CD8-positive, alpha-beta memory T cell (primary cell): ENCODE measurements at regions of chr11 and their contacts with region 1.

Region 1: GRCh38 chr11:82927254-82927880 is 25.8 kb downstream of the DDIAS start:
- DNase-seq: peak in 3 of 5 donors; percentile 49 to 66 (median 55)
- H3K4me3 ChIP-seq: no peak overlapping the region
- H3K4me3 Mint-ChIP-seq: no peak overlapping the region
- H3K27ac ChIP-seq: no peak overlapping the region
- H3K27ac Mint-ChIP-seq: peak overlapping the region in 5 of 8 donors; percentile 4 to 78 (median 20)
- H3K4me1 ChIP-seq: peaks cover 12% of the 10 kb centered on the region
- H3K4me1 Mint-ChIP-seq: peaks cover 20 to 28% (median 27%) of the 10 kb centered on the region in 3 donors
- H3K27me3 ChIP-seq: no peaks in the 10 kb centered on the region
- H3K27me3 Mint-ChIP-seq: no peaks in the 10 kb centered on the region

Region 2: DNA sequence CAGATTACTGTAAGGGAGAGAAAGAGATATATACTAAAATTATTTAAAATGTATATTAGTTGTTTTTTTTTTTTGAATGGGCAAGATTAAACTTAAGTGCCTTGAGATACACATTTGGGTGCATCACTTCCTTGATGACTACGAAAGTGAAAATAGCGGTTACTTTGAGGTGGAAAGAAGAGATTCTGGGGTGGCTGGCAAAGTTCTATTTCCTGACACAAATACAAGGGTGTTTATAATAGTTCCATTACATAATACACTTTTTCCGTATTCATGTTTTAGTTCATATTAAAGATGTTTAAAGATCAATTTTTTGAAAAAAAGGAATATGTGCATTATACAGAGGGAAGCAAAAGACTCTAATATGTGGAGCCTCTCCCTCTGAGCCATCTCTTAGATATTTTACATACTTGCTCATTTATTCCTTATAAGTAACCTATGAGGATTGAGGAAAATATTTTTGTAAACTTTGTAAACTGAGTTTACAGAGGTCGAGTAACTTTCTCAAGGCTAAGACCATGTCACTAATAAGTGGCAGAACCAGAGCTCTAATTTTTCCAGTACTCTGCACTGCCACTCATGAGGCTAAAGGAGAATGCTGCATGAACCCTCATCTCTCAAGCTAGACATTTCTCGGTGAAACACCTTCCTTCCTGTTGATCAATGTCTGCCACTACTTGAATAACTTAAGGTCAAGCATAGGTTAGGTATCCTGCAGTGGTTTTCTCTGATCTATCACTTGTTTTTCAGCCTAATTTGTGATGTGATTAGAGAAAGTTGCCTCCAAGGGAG is 32.8 kb after region 1 on chr11:
- CTCF ChIA-PET with region 1: interaction called, 10 read pairs
- POLR2A ChIA-PET with region 1: interaction called, 6 read pairs
- DNase-seq: peak in 4 of 5 donors; percentile 21 to 85 (median 74)
- H3K4me3 ChIP-seq: peak overlapping the region; percentile 49
- H3K4me3 Mint-ChIP-seq: peak overlapping the region; percentile 55 to 81 (median 78)
- H3K27ac ChIP-seq: peak overlapping the region; percentile 70
- H3K27ac Mint-ChIP-seq: peak overlapping the region; percentile 90 to 98 (median 96)
- H3K4me1 ChIP-seq: peaks cover 80% of the 10 kb centered on the region
- H3K4me1 Mint-ChIP-seq: peaks cover 68 to 93% (median 91%) of the 10 kb centered on the region in 3 donors
- H3K27me3 ChIP-seq: no peaks in the 10 kb centered on the region
- H3K27me3 Mint-ChIP-seq: no peaks in the 10 kb centered on the region